Calu3 (cell line): ENCODE measurements at regions of chr13 and their contacts with region 1.

Region 1: DNA sequence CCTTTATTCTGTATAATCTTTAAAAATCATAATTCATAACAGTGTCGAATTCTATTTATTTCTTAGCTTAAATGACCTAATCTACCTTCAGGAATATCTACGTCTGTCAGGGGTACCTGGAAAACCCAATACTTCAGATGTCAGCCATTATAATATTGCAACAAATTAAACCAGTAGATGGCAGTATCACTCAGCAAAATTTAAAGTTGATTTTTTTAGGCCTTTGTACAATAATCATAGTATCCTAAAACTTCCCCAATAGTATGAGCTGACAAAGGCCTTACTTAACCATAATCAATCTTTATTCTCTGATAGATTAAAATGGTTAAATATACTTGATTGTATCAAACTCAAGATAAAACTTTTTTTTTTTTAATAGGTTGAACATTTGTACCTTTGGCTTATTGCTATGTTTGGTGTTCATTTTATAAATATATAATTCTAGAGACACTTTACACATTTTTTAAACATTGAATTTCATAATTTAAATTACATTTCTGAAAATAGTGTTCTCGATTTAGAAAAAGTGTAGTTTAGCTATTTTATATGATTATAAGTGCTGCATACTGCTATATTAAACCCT is 830.2 kb upstream of the SPRY2 start:
- DNase-seq: no peak
- H3K4me3 Mint-ChIP-seq: no peak overlapping the region
- H3K27ac Mint-ChIP-seq: no peak overlapping the region
- H3K4me1 Mint-ChIP-seq: no peaks in the 10 kb centered on the region
- H3K27me3 Mint-ChIP-seq: no peaks in the 10 kb centered on the region
- CTCF ChIP-seq: no peak

Region 2: DNA sequence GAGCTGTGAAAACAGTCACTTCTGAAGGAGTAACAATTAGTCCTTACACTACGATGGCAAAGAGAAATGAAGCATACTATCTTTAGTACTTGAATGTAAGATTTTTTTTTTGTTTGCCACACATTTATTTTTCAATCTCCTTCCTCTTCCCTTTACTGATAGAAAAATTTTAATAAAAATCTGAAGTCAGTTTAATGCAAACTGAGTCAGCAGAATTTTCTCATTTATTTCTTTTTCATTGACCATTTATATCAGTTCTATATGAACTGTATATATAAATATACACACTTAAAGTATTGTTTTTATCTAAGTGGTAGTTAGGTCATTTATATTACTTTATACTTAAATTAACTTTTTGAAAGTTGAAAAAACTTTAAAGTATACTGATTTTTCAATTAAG is 178.9 kb after region 1 on chr13:
- CTCF ChIA-PET with region 1: no interaction called
- intact Hi-C with region 1: loop called (anchors 10 kb)
- DNase-seq: no peak
- H3K4me3 Mint-ChIP-seq: no peak overlapping the region
- H3K27ac Mint-ChIP-seq: no peak overlapping the region
- H3K4me1 Mint-ChIP-seq: no peaks in the 10 kb centered on the region
- H3K27me3 Mint-ChIP-seq: no peaks in the 10 kb centered on the region
- CTCF ChIP-seq: no peak

Region 3: GRCh38 chr13:81480634-81481033 is 309.5 kb after region 1 on chr13:
- CTCF ChIA-PET with region 1: interaction called, 6 read pairs
- intact Hi-C with region 1: loop called (anchors 2 kb)
- DNase-seq: no peak
- H3K4me3 Mint-ChIP-seq: no peak overlapping the region
- H3K27ac Mint-ChIP-seq: no peak overlapping the region
- H3K4me1 Mint-ChIP-seq: no peaks in the 10 kb centered on the region
- H3K27me3 Mint-ChIP-seq: no peaks in the 10 kb centered on the region
- CTCF ChIP-seq: no peak

Region 4: GRCh38 chr13:81872581-81872980 is 701.4 kb after region 1 on chr13:
- CTCF ChIA-PET with region 1: no interaction called
- intact Hi-C with region 1: loop called (anchors 5 kb)
- DNase-seq: peak; percentile 3
- H3K4me3 Mint-ChIP-seq: no peak overlapping the region
- H3K27ac Mint-ChIP-seq: no peak overlapping the region
- H3K4me1 Mint-ChIP-seq: no peaks in the 10 kb centered on the region
- H3K27me3 Mint-ChIP-seq: no peaks in the 10 kb centered on the region
- CTCF ChIP-seq: no peak